Activated CD4-positive, alpha-beta memory T cell treated with anti-CD3 and anti-CD28 coated beads, Interleukin-2, amount 10 ng/mL, durations not matched to agents 7 days and 5 days (primary cell): ENCODE measurements at regions of chr20 and their contacts with region 1.

Region 1: GRCh38 chr20:31652917-31653396 is 15.2 kb downstream of the COX4I2 start:
- DNase-seq: no peak
- H3K4me3 Mint-ChIP-seq: no peak overlapping the region
- H3K27ac Mint-ChIP-seq: no peak overlapping the region
- H3K4me1 Mint-ChIP-seq: no peaks in the 10 kb centered on the region
- H3K27me3 Mint-ChIP-seq: peaks cover 12% of the 10 kb centered on the region

Region 2: DNA sequence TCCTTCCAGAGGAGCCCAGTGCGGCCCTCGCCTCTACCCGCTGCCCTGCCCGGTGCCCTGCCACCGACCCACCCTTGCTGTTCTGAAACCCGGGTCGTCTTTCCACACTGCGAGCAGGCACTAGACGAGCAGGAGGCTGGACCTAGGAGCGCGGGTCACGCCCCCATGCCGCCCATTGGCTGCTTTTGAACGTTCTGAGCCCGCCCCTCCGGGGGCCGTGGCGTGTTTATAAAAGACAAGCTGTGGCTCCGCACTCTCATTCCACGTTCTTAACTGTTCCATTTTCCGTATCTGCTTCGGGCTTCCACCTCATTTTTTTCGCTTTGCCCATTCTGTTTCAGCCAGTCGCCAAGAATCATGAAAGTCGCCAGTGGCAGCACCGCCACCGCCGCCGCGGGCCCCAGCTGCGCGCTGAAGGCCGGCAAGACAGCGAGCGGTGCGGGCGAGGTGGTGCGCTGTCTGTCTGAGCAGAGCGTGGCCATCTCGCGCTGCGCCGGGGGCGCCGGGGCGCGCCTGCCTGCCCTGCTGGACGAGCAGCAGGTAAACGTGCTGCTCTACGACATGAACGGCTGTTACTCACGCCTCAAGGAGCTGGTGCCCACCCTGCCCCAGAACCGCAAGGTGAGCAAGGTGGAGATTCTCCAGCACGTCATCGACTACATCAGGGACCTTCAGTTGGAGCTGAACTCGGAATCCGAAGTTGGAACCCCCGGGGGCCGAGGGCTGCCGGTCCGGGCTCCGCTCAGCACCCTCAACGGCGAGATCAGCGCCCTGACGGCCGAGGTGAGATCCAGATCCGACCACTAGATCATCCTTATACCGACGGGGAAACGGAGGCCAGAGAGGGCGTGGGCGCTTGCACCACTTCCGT is 47.7 kb before region 1 on chr20 and contains the start of gene ID1:
- CTCF ChIA-PET with region 1: no interaction called
- POLR2A ChIA-PET with region 1: no interaction called
- DNase-seq: peak; percentile 91
- H3K4me3 Mint-ChIP-seq: peak within 1 kb of the TSS; percentile 88
- H3K27ac Mint-ChIP-seq: peak within 1 kb of the TSS; percentile 29
- H3K4me1 Mint-ChIP-seq: peaks cover 33% of the 10 kb centered on the region
- H3K27me3 Mint-ChIP-seq: peaks cover 52% of the 10 kb centered on the region
- total RNA-seq, gene ID1: 0.48 to 0.58 TPM

Region 3: DNA sequence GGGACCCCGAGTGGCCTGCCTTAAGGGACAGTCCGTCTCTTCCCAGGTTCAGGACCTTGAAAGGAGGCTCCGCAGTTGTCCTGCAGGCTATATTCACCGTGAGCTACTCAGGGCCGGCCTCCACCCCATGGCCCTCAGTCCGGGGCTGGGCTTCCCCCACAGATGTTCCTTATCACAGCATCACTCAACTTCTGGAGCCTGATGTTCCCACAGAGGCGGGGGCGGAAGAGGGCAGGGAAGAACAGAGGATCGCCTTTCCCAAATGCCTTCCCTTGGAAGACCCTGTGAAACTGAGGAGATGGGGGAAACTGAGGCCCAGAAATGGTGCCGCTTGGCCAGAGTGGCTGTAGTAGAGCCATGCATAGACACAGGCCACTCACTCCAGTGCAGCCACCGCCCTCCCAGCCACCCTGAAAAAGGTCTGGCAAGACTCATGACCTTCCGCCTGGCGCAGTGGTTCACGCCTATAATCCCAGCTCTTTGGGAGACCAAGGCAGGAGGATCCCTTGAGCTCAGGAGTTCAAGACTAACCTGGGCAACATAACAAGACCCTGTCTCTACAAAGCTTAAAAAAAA is 19.5 kb before region 1 on chr20:
- CTCF ChIA-PET with region 1: interaction called, 53 read pairs
- POLR2A ChIA-PET with region 1: no interaction called
- DNase-seq: no peak
- H3K4me3 Mint-ChIP-seq: no peak overlapping the region
- H3K27ac Mint-ChIP-seq: no peak overlapping the region
- H3K4me1 Mint-ChIP-seq: peaks cover 3% of the 10 kb centered on the region
- H3K27me3 Mint-ChIP-seq: no peaks in the 10 kb centered on the region